ENCODE measurements at regions of chr11 and their contacts with region 1.

Region 1: DNA sequence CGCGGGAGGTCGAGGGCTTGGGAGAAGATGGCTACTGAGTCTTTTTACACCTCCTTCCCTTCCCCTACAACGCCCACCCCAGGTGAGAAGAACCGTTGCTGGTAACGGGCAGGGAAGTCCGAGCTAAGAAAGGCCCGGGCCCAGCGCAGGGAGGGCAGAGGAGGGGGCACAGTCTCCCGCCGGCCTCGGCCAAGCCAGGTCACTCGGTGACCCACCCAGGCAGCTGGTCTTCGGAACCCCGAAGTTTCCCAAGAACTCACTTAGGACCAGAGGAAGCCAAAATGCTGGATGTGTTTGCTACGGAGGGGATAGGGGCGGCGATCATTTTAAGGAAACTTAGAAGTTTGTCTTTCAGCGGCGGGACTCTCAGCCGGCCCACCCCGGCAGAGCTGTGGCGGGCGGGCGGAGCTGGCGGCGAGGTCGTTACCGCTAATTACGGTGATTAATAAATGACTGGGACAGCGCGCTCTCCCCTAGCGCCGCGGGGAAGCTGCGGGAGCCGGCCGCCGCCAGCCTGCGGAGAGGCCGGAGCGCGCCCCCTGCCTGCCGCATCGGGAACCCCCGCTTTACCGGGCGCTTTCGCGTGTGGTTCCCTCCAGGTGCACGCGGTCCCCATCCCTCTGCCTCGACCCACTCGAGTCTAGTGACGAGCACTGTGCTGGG is 820 bp downstream of the ROBO3 start:
- DNase-seq: no peak
- ATAC-seq: peak; percentile 75
- H3K4me3 ChIP-seq: peak overlapping the region in 2 of 3 experiments; percentile 33 to 66; a peak in 2 of 6 replicates
- H3K27ac ChIP-seq: no peak overlapping the region
- H3K4me1 ChIP-seq: peaks cover 34% of the 10 kb centered on the region
- H3K27me3 ChIP-seq: peaks cover 18 to 83% of the 10 kb centered on the region in 2 experiments; a peak in 4 of 5 replicates
- CTCF ChIP-seq: peak; percentile 84
- EP300 ChIP-seq: no peak
- POLR2A ChIP-seq: no peak
- RAD21 ChIP-seq: peak; percentile 50; the same call in 1 of the 2 replicates

Region 2: GRCh38 chr11:124402326-124402922 is 463.6 kb before region 1 on chr11:
- CTCF ChIA-PET with region 1: no interaction called
- POLR2A ChIA-PET with region 1: no interaction called
- in situ Hi-C with region 1: loop called (anchors 10 kb)
- intact Hi-C with region 1: no loop called
- DNase-seq: peak; percentile 56
- ATAC-seq: peak; percentile 93
- H3K4me3 ChIP-seq: no peak overlapping the region
- H3K27ac ChIP-seq: no peak overlapping the region
- H3K4me1 ChIP-seq: no peaks in the 10 kb centered on the region
- H3K27me3 ChIP-seq: no peaks in the 10 kb centered on the region
- CTCF ChIP-seq: peak; percentile 68
- EP300 ChIP-seq: no peak
- POLR2A ChIP-seq: no peak
- RAD21 ChIP-seq: no peak

Region 3: GRCh38 chr11:124415356-124415923 is 450.6 kb before region 1 on chr11:
- CTCF ChIA-PET with region 1: no interaction called
- POLR2A ChIA-PET with region 1: no interaction called
- in situ Hi-C with region 1: no loop called
- intact Hi-C with region 1: loop called (anchors 2 kb)
- DNase-seq: peak; percentile 37
- ATAC-seq: no peak
- H3K4me3 ChIP-seq: no peak overlapping the region
- H3K27ac ChIP-seq: no peak overlapping the region
- H3K4me1 ChIP-seq: no peaks in the 10 kb centered on the region
- H3K27me3 ChIP-seq: no peaks in the 10 kb centered on the region; a peak in 2 of 5 replicates
- CTCF ChIP-seq: peak; percentile 43; the same call in 1 of the 2 replicates
- EP300 ChIP-seq: no peak
- POLR2A ChIP-seq: no peak
- RAD21 ChIP-seq: no peak

Region 4: GRCh38 chr11:124644426-124645280 is 221.4 kb before region 1 on chr11:
- CTCF ChIA-PET with region 1: interaction called, 18 read pairs
- POLR2A ChIA-PET with region 1: no interaction called
- in situ Hi-C with region 1: loop called (anchors 10 kb)
- intact Hi-C with region 1: loop called (anchors 1 kb)
- DNase-seq: peak; percentile 64
- ATAC-seq: peak; percentile 95
- H3K4me3 ChIP-seq: peak overlapping the region in 2 of 3 experiments; percentile 46 to 52; a peak in 2 of 6 replicates
- H3K27ac ChIP-seq: no peak overlapping the region
- H3K4me1 ChIP-seq: peaks cover 7% of the 10 kb centered on the region
- H3K27me3 ChIP-seq: no peaks in the 10 kb centered on the region
- CTCF ChIP-seq: peak; percentile 81
- EP300 ChIP-seq: no peak
- POLR2A ChIP-seq: no peak
- RAD21 ChIP-seq: peak; percentile 58; the same call in 1 of the 2 replicates

Region 5: DNA sequence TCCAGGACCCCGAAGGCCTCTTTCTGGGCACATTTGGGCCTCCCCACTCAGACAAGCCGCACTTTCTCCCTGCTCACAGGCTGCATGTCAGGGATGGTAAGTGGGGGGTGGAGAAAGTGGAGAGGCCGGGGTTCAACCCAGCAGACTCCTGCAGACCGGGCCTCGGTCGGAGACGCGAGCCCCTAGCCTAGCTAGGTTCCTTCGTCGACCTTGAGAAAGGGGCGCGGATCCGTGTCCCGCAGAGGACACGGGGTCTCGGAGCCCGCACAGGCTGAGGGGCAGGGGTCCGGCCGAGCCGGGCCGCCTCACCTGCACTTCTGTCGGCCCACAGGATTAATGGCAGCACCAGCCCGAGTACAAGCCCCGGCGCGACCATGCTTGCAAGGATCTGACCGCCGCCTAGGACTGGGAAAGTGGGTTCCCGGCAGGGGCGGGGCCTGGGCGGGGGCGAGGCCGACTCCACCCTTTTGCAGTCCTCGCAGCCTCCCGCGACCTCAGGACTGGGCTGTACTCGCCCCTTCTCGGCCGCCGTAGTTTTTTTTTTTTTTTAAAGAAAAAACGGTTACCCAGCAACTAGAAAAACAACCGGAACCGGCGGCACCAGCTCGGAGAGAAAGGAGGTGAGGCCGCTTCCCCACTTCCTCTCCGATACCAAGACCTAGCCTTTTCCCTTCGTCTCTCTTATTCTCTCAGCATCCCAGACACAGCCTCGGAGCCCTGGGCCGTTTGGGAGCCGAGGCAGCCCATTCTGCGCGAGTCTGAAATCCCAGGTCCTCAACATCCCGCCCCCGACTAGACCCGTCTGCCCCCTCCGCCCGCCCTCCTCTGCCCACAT is 192.5 kb before region 1 on chr11 and contains the starts of genes SIAE and SPA17:
- CTCF ChIA-PET with region 1: interaction called, 10 read pairs
- POLR2A ChIA-PET with region 1: interaction called, 4 read pairs
- in situ Hi-C with region 1: loop called (anchors 10 kb)
- intact Hi-C with region 1: loop called (anchors 1 kb)
- DNase-seq: peak; percentile 91
- ATAC-seq: peak; percentile 97
- H3K4me3 ChIP-seq: peak within 1 kb of the TSS; percentile 73 to 99 (median 99)
- H3K27ac ChIP-seq: peak within 1 kb of the TSS; percentile 74
- H3K4me1 ChIP-seq: peaks cover 19% of the 10 kb centered on the region
- H3K27me3 ChIP-seq: no peaks in the 10 kb centered on the region; a peak in 1 of 5 replicates
- CTCF ChIP-seq: no peak
- EP300 ChIP-seq: 0 out of 4 replicates have a peak, but pooled peaks of 1 of the 2 experiments have one; percentile 38
- POLR2A ChIP-seq: peak; percentile 73 to 87
- RAD21 ChIP-seq: peak; percentile 21; the same call in 1 of the 2 replicates
- total RNA-seq, gene SIAE: 4.5 and 7.0 TPM in 2 replicates
- total RNA-seq, gene SPA17: 8.4 and 12.7 TPM in 2 replicates

Region 6: GRCh38 chr11:124837491-124837856 is 28.6 kb before region 1 on chr11:
- CTCF ChIA-PET with region 1: interaction called, 12 read pairs
- POLR2A ChIA-PET with region 1: no interaction called
- in situ Hi-C with region 1: no loop called
- intact Hi-C with region 1: loop called (anchors 1 kb)
- DNase-seq: peak; percentile 58
- ATAC-seq: peak; percentile 57
- H3K4me3 ChIP-seq: no peak overlapping the region
- H3K27ac ChIP-seq: no peak overlapping the region
- H3K4me1 ChIP-seq: peaks cover 32% of the 10 kb centered on the region
- H3K27me3 ChIP-seq: peaks cover 11 to 55% of the 10 kb centered on the region in 2 experiments
- CTCF ChIP-seq: peak; percentile 71
- EP300 ChIP-seq: no peak
- POLR2A ChIP-seq: no peak
- RAD21 ChIP-seq: no peak

Region 7: GRCh38 chr11:124891373-124891861 is 25.4 kb after region 1 on chr11:
- CTCF ChIA-PET with region 1: no interaction called
- POLR2A ChIA-PET with region 1: no interaction called
- in situ Hi-C with region 1: no loop called
- intact Hi-C with region 1: no loop called
- DNase-seq: no peak
- ATAC-seq: peak; percentile 58
- H3K4me3 ChIP-seq: no peak overlapping the region
- H3K27ac ChIP-seq: no peak overlapping the region
- H3K4me1 ChIP-seq: peaks cover 21% of the 10 kb centered on the region
- H3K27me3 ChIP-seq: peaks cover 0 to 58% of the 10 kb centered on the region in 2 experiments; a peak in 4 of 5 replicates
- CTCF ChIP-seq: peak; percentile 38
- EP300 ChIP-seq: no peak
- POLR2A ChIP-seq: no peak
- RAD21 ChIP-seq: no peak